Activated B cell treated with CpG ODN at 0.5 μM for 24 hours (primary cell): ENCODE measurements at regions of chr7 and their contacts with region 1.

Region 1: GRCh38 chr7:151368136-151368571 is 26.5 kb downstream of the NUB1 start:
- DNase-seq: peak; percentile 64
- ATAC-seq: peak; percentile 100
- H3K4me3 Mint-ChIP-seq: no peak overlapping the region
- H3K27ac Mint-ChIP-seq: no peak overlapping the region
- H3K4me1 Mint-ChIP-seq: peaks cover 6% of the 10 kb centered on the region
- H3K27me3 Mint-ChIP-seq: no peaks in the 10 kb centered on the region
- CTCF ChIP-seq: peak; percentile 37

Region 2: GRCh38 chr7:151315038-151315655 is 53.0 kb before region 1 on chr7:
- CTCF ChIA-PET with region 1: interaction called, 27 read pairs
- POLR2A ChIA-PET with region 1: no interaction called
- intact Hi-C with region 1: loop called (anchors 1 kb)
- DNase-seq: peak; percentile 41
- ATAC-seq: peak; percentile 87
- H3K4me3 Mint-ChIP-seq: no peak overlapping the region
- H3K27ac Mint-ChIP-seq: no peak overlapping the region
- H3K4me1 Mint-ChIP-seq: peaks cover 2% of the 10 kb centered on the region
- H3K27me3 Mint-ChIP-seq: no peaks in the 10 kb centered on the region
- CTCF ChIP-seq: no peak

Region 3: DNA sequence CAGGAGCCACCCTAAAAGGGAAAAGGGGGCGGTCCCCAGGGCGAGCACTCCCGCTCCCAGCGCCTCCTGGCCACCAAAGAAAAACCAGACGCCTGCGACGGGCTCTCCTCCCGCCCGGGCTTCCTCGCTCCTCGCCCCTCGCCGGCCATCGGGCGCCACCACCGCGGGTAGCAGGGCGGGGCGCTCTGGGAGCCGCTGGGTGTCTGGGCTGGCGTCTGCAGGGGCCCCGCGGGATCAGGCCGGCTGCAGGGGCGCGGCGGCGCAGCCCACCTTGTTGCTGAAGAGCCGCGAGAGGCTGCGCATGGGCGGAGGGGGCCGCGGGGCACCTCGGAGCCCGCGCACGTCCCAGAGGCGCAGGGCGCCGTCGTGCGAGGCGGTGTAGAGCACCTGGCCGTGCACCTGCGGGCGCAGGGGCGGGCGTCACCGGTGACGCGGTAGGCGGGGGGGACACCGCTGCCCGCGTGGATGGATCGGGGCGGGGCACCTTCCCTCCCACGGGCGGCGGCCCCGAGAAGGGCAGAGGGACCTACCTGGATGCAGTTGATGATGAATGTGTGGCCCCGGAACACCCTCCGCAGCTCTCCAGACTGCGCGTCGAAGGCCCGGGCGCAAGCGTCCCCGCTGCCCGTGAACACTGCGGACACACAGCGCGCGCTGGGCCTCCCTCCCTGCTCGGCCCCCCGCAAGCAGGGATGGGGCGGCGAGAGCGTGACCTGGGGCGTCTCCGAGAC is 13.4 kb after region 1 on chr7:
- CTCF ChIA-PET with region 1: interaction called, 3 read pairs
- POLR2A ChIA-PET with region 1: no interaction called
- intact Hi-C with region 1: loop called (anchors 1 kb)
- DNase-seq: peak; percentile 57
- ATAC-seq: peak; percentile 78
- H3K4me3 Mint-ChIP-seq: peak overlapping the region; percentile 83
- H3K27ac Mint-ChIP-seq: peak overlapping the region; percentile 61
- H3K4me1 Mint-ChIP-seq: peaks cover 26% of the 10 kb centered on the region
- H3K27me3 Mint-ChIP-seq: peaks cover 2% of the 10 kb centered on the region
- CTCF ChIP-seq: no peak

Region 4: DNA sequence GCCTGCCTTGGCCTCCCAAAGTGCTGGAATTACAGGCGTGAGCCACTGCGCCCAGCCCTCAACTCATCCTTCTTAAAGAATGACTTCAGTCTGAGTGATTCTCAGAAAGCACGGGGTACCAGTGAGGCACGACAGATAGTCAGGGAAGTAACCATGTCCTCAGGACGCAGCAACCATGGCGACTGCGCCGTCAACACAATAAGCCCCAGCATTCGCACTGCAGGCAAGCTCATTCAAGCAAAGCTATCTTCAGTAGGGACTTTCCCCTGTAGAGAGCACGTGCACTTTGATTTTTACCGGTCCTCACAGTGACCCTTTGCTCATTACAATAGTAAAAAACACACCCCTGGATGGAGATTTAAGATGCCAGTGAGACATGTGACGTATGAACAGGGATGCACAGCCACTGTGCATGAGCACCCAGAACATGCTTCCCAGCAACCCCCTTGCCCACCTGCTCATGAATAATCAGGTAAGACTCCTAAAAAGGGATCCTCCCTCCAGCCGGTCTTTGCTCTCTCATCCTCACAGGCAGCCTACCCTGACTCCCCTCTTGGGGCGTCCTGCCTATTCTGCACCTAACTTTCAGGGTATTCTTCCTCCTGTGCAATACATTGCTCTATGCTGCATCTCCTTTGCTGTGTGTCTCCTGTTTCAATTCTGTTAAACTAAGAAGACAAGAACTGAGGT is 32.6 kb after region 1 on chr7:
- CTCF ChIA-PET with region 1: interaction called, 4 read pairs
- POLR2A ChIA-PET with region 1: no interaction called
- intact Hi-C with region 1: loop called (anchors 1 kb)
- DNase-seq: peak; percentile 55
- ATAC-seq: peak; percentile 96
- H3K4me3 Mint-ChIP-seq: peak overlapping the region; percentile 36
- H3K27ac Mint-ChIP-seq: peak overlapping the region; percentile 81
- H3K4me1 Mint-ChIP-seq: peaks cover 26% of the 10 kb centered on the region
- H3K27me3 Mint-ChIP-seq: no peaks in the 10 kb centered on the region
- CTCF ChIP-seq: no peak

Region 5: GRCh38 chr7:151410405-151411390 is 42.5 kb after region 1 on chr7:
- CTCF ChIA-PET with region 1: interaction called, 3 read pairs
- POLR2A ChIA-PET with region 1: no interaction called
- intact Hi-C with region 1: loop called (anchors 1 kb)
- DNase-seq: no peak
- ATAC-seq: no peak
- H3K4me3 Mint-ChIP-seq: peak overlapping the region; percentile 19
- H3K27ac Mint-ChIP-seq: no peak overlapping the region
- H3K4me1 Mint-ChIP-seq: peaks cover 25% of the 10 kb centered on the region
- H3K27me3 Mint-ChIP-seq: peaks cover 43% of the 10 kb centered on the region
- CTCF ChIP-seq: no peak

Region 6: GRCh38 chr7:151448261-151449252 is 80.4 kb after region 1 on chr7:
- CTCF ChIA-PET with region 1: interaction called, 77 read pairs
- POLR2A ChIA-PET with region 1: interaction called, 4 read pairs
- intact Hi-C with region 1: loop called (anchors 1 kb)
- DNase-seq: peak; percentile 70
- ATAC-seq: peak; percentile 86
- H3K4me3 Mint-ChIP-seq: peak overlapping the region; percentile 79
- H3K27ac Mint-ChIP-seq: no peak overlapping the region
- H3K4me1 Mint-ChIP-seq: peaks cover 3% of the 10 kb centered on the region
- H3K27me3 Mint-ChIP-seq: peaks cover 14% of the 10 kb centered on the region
- CTCF ChIP-seq: no peak